ENCODE measurements at regions of chr2 and their contacts with region 1.

Region 1: GRCh38 chr2:152635635-152636298 is 81.5 kb downstream of the PRPF40A start:
- DNase-seq: peak; percentile 60
- H3K4me3 ChIP-seq: no peak overlapping the region
- H3K27ac ChIP-seq: no peak overlapping the region
- H3K4me1 ChIP-seq: no peaks in the 10 kb centered on the region
- H3K27me3 ChIP-seq: no peaks in the 10 kb centered on the region
- CTCF ChIP-seq: peak; percentile 86
- EP300 ChIP-seq: no peak
- RAD21 ChIP-seq: peak; percentile 80

Region 2: GRCh38 chr2:152175458-152176325 is 460.1 kb before region 1 on chr2 and contains the start of gene STAM2:
- CTCF ChIA-PET with region 1: interaction called, 29 read pairs
- POLR2A ChIA-PET with region 1: no interaction called
- DNase-seq: peak; percentile 94
- H3K4me3 ChIP-seq: peak within 1 kb of the TSS; percentile 77 to 94
- H3K27ac ChIP-seq: peak within 1 kb of the TSS; percentile 92 to 97
- H3K4me1 ChIP-seq: peaks cover 0 to 6% of the 10 kb centered on the region in 2 experiments; a peak in 2 of 4 replicates
- H3K27me3 ChIP-seq: no peaks in the 10 kb centered on the region
- CTCF ChIP-seq: peak; percentile 93
- EP300 ChIP-seq: no peak; a peak in 1 of 4 replicates
- RAD21 ChIP-seq: peak; percentile 89
- polyA plus RNA-seq, gene STAM2: 6.9 and 10.1 TPM in 2 replicates

Region 3: DNA sequence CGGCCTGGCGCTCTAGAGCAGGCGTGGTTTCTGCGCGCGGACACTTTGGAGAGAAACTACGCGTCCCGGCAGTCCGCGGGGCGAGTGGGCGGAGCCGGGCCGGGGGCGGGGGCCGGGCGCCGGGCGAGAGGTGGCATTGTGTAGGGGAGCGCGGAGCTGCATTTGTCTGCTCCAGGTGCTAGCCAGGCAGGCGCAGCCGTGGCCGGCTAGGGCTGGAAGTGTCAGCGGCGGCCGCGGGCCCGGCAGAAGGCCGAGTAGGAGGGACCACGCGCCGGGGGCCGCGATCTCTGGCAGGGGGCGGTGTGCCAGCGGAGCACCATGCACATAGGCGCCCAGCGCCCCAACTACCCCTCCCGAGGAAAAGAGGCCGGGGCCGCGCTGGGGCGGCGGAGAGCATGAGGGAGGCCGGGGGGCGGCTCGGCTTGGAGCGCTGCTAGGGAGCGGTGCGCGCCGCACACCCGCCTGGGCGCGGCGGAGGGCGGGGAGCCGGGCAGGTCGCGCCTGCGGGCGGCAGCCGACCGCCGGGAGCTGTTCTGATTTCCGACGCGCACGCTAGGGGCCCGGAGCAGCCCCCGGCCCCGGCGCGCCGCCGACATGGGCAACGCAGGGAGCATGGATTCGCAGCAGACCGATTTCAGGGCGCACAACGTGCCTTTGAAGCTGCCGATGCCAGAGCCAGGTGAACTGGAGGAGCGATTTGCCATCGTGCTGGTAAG is 300.6 kb before region 1 on chr2 and contains the start of gene FMNL2:
- CTCF ChIA-PET with region 1: interaction called, 11 read pairs
- POLR2A ChIA-PET with region 1: interaction called, 3 read pairs
- DNase-seq: peak; percentile 95
- H3K4me3 ChIP-seq: peak within 1 kb of the TSS; percentile 81 to 90
- H3K27ac ChIP-seq: peak within 1 kb of the TSS; percentile 52 to 83; a peak in 3 of 4 replicates
- H3K4me1 ChIP-seq: peaks cover 4 to 7% of the 10 kb centered on the region in 2 experiments; a peak in 3 of 4 replicates
- H3K27me3 ChIP-seq: no peaks in the 10 kb centered on the region
- CTCF ChIP-seq: peak; percentile 30; the same call in 1 of the 2 replicates
- EP300 ChIP-seq: no peak
- RAD21 ChIP-seq: no peak; the same call in none of the 2 replicates
- polyA plus RNA-seq, gene FMNL2: 14.5 and 16.1 TPM in 2 replicates

Region 4: DNA sequence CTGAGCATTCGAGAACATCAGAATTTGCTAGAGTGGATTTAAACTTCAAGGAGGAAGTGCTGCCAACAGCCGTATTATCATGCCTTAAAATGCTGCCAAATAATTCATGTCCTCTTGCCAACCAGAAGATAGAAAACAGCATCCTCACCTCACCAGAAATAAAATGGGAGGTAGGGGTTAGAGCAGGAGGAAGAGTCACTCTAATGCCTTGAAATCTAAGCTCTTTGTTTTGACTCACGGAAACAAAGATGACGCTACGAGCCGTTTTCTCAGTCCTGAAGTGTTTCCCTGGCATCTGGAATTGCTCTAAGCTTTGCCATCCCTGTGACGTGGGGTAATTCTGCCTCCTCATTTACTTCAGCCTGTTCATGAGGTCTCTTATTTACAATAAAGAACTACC is 15.6 kb before region 1 on chr2:
- CTCF ChIA-PET with region 1: interaction called, 28 read pairs
- POLR2A ChIA-PET with region 1: no interaction called
- DNase-seq: no peak
- H3K4me3 ChIP-seq: no peak overlapping the region
- H3K27ac ChIP-seq: no peak overlapping the region
- H3K4me1 ChIP-seq: peaks cover 0 to 14% of the 10 kb centered on the region in 2 experiments; a peak in 2 of 4 replicates
- H3K27me3 ChIP-seq: no peaks in the 10 kb centered on the region
- CTCF ChIP-seq: no peak
- EP300 ChIP-seq: no peak
- RAD21 ChIP-seq: no peak

Measured in SK-N-SH (cell line).